ENCODE measurements at regions of chr10 and their contacts with region 1.

Region 1: GRCh38 chr10:97149079-97149531 is 36.7 kb downstream of the SLIT1 start:
- DNase-seq: no peak

Region 2: GRCh38 chr10:97081621-97082235 is 67.4 kb before region 1 on chr10:
- in situ Hi-C with region 1: no loop called
- DNase-seq: peak; percentile 44

Region 3: DNA sequence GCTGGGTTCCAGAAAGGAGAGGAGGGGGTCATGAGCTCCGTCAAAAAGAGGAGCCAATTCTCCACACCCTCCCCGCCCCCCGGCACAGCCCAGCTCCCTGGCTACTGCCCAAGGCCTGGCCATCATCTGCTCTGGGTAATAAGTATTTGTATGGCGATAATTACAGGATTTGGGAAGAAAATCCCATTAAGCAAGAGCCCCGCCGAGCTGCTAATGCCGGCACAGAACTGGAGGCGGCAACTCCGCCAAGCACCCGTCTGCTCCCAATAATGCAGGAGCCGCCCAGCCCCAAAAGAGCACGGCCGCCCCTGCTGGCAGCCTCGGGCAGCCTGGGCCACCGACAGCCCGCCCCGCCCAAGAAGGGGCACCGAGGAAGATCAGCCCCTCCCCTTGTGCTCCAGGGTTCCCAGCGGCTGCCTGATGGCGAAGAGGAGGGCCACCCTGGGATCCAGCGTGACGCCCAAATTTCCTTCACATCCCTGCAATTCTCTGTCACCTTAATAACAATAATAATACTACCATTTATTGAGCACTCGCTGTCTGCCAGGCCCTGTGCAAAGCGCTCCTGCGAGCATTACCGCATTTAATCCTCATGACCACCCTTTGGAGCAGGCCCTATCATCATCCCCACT is 30.7 kb after region 1 on chr10:
- in situ Hi-C with region 1: loop called (anchors 5 kb)
- DNase-seq: peak; percentile 59

Measured in G401 (cell line).